ENCODE measurements at regions of chr2 and their contacts with region 1.

Region 1: GRCh38 chr2:76599732-76600368 is 889.1 kb upstream of the GCFC2 start:
- DNase-seq: peak; percentile 58
- CTCF ChIP-seq: peak; percentile 71

Region 2: DNA sequence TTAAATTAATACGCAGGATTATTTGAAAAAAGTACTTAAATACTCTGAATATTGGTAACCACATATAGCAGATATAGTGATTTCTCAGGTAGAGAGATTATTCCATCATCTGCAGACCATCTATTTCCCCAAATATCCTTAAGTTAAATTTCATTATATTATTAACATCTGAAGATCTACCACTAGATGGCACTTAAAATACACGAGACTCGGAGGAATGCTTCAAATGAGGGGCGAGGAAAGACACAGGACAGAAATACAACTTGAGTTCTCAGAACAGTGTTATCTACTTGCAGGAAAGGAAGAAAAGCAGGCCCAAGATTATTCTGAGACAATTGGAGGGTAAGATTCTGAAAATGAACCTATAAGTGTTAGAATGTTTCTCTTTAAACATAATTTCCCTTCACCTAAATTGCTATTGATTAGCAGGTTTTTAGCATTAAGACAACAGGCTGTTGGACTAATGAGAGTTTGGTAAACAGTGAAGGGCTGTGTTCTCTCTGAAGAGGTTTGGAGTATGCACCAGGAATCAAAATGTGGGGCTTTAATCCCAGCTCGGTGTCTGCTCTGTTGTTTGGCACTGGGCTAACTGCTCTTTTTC is 812.2 kb before region 1 on chr2:
- in situ Hi-C with region 1: loop called (anchors 25 kb)
- DNase-seq: no peak
- CTCF ChIP-seq: peak; percentile 40